CD4-positive, alpha-beta T cell (primary cell): ENCODE measurements at regions of chr10 and their contacts with region 1.

Region 1: GRCh38 chr10:12348870-12349628 is at the start of gene CAMK1D:
- DNase-seq: peak; percentile 84 to 96 (median 90)
- ATAC-seq: peak; percentile 60
- H3K4me3 ChIP-seq: peak within 1 kb of the TSS; percentile 95
- H3K4me3 Mint-ChIP-seq: peak within 1 kb of the TSS; percentile 97
- H3K27ac ChIP-seq: peak within 1 kb of the TSS; percentile 38 to 84
- H3K27ac Mint-ChIP-seq: peak within 1 kb of the TSS; percentile 93
- H3K4me1 ChIP-seq: peaks cover 28% of the 10 kb centered on the region
- H3K4me1 Mint-ChIP-seq: peaks cover 46% of the 10 kb centered on the region
- H3K27me3 ChIP-seq: no peaks in the 10 kb centered on the region
- H3K27me3 Mint-ChIP-seq: no peaks in the 10 kb centered on the region
- CTCF ChIP-seq: peak; percentile 20
- total RNA-seq, gene CAMK1D: 28.8 to 35.3 TPM

Region 2: DNA sequence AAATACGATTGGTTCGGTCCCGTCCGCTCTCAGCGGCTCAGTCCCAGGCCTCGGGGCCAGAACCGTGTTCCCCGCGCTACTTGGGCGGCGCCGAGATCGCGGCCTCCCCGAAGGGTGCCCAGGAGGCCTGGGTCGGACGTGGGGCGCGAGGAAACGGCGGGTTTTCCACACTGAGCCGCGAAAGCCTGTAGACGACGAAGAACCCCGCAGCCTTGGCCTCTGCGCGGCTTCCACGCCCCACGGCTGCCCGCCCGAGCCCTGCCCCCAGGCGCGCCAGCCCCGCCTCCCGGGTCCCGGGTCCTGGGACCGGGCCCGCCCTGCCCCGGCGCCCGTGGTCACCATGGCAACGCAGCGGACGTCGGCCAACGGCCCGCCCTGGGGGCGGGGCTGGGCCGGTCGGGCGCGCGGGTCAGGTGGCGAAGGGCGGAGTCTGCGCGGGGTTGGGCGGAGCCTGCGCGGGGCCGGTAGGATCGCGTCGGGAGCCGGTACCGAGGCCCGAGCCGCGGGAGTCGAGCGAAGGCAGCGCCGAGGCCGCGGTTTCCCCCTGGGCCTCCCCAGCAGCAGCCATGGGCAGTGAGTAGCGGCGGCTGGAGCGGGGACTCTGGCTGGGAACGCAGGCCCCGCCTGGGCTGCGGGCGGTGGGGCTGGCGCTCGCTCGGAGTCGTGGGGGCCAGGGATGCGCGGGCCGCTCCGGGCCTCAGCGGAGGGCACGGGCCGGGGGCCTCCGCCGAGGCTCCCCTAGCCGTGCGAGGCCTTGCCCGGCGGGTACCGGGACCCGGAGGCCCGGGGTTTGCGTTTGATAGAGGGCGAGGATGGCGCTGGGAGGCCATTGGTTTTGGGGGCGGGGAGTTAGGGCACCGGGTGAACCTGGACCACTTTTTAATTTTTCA is 219.6 kb before region 1 on chr10 and contains the start of gene SEC61A2:
- CTCF ChIA-PET with region 1: no interaction called
- POLR2A ChIA-PET with region 1: no interaction called
- intact Hi-C with region 1: loop called in 1 of 2 experiments (anchors 5 kb)
- DNase-seq: peak; percentile 91 to 99 (median 98)
- ATAC-seq: peak; percentile 88
- H3K4me3 ChIP-seq: peak within 1 kb of the TSS; percentile 79
- H3K4me3 Mint-ChIP-seq: peak within 1 kb of the TSS; percentile 96
- H3K27ac ChIP-seq: peak within 1 kb of the TSS; percentile 76 to 79
- H3K27ac Mint-ChIP-seq: peak within 1 kb of the TSS; percentile 83
- H3K4me1 ChIP-seq: peaks cover 21% of the 10 kb centered on the region
- H3K4me1 Mint-ChIP-seq: peaks cover 25% of the 10 kb centered on the region
- H3K27me3 ChIP-seq: no peaks in the 10 kb centered on the region
- H3K27me3 Mint-ChIP-seq: no peaks in the 10 kb centered on the region
- CTCF ChIP-seq: no peak
- total RNA-seq, gene SEC61A2: 9.9 to 10.8 TPM

Region 3: GRCh38 chr10:12264204-12264940 is 84.7 kb before region 1 on chr10:
- CTCF ChIA-PET with region 1: interaction called, 3 read pairs
- POLR2A ChIA-PET with region 1: interaction called, 4 read pairs
- intact Hi-C with region 1: loop called in 1 of 2 experiments (anchors 5 kb)
- DNase-seq: peak; percentile 49 to 85 (median 67)
- ATAC-seq: peak; percentile 82
- H3K4me3 ChIP-seq: peak overlapping the region; percentile 53
- H3K4me3 Mint-ChIP-seq: peak overlapping the region; percentile 71
- H3K27ac ChIP-seq: no peak overlapping the region
- H3K27ac Mint-ChIP-seq: peak overlapping the region; percentile 39
- H3K4me1 ChIP-seq: peaks cover 14% of the 10 kb centered on the region
- H3K4me1 Mint-ChIP-seq: peaks cover 14% of the 10 kb centered on the region
- H3K27me3 ChIP-seq: no peaks in the 10 kb centered on the region
- H3K27me3 Mint-ChIP-seq: no peaks in the 10 kb centered on the region
- CTCF ChIP-seq: peak; percentile 93

Region 4: GRCh38 chr10:12381536-12382156 is 32.6 kb after region 1 on chr10:
- CTCF ChIA-PET with region 1: no interaction called
- POLR2A ChIA-PET with region 1: no interaction called
- intact Hi-C with region 1: no loop called
- DNase-seq: no peak
- ATAC-seq: no peak
- H3K4me3 ChIP-seq: no peak overlapping the region
- H3K4me3 Mint-ChIP-seq: no peak overlapping the region
- H3K27ac ChIP-seq: no peak overlapping the region
- H3K27ac Mint-ChIP-seq: no peak overlapping the region
- H3K4me1 ChIP-seq: no peaks in the 10 kb centered on the region
- H3K4me1 Mint-ChIP-seq: peaks cover 21% of the 10 kb centered on the region
- H3K27me3 ChIP-seq: no peaks in the 10 kb centered on the region
- H3K27me3 Mint-ChIP-seq: no peaks in the 10 kb centered on the region
- CTCF ChIP-seq: no peak

Region 5: DNA sequence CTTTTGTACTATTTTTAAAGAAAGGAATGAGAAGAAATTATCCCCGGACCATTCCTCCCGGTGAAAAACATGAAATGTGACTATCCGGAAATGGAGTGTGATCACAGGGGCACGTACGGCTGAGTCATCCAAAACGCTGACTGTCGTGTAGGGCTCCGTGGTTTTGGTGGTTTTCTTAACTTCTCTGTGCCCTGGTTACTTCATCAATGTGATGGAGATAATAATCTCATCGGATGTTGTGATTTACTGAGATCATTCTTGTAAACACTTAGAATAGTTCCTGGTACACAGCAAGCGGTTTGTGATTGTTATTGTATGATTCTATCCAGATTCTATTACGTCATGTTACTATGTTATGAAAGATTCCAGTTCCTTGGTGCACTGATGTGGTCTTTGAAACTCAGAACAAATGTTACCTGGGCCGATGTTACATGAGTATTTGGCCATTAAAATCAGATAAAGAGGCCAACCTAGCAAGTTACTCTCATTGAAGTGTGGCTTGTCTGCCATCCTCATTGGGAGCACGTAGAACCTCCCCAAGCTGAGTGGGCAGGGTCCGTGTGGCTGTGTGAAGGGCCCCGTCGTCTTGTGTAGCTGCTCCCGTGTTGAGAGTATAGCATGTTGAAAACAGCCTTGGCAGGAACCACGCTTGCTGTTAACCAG is 99.8 kb after region 1 on chr10:
- CTCF ChIA-PET with region 1: interaction called, 4 read pairs
- POLR2A ChIA-PET with region 1: interaction called, 19 read pairs
- intact Hi-C with region 1: loop called (anchors 1 kb)
- DNase-seq: peak; percentile 53 to 96 (median 68)
- ATAC-seq: peak; percentile 87
- H3K4me3 ChIP-seq: peak overlapping the region; percentile 21
- H3K4me3 Mint-ChIP-seq: peak overlapping the region; percentile 72
- H3K27ac ChIP-seq: peak overlapping the region; percentile 58 to 72
- H3K27ac Mint-ChIP-seq: peak overlapping the region; percentile 88
- H3K4me1 ChIP-seq: peaks cover 18% of the 10 kb centered on the region
- H3K4me1 Mint-ChIP-seq: peaks cover 44% of the 10 kb centered on the region
- H3K27me3 ChIP-seq: no peaks in the 10 kb centered on the region
- H3K27me3 Mint-ChIP-seq: no peaks in the 10 kb centered on the region
- CTCF ChIP-seq: no peak

Region 6: DNA sequence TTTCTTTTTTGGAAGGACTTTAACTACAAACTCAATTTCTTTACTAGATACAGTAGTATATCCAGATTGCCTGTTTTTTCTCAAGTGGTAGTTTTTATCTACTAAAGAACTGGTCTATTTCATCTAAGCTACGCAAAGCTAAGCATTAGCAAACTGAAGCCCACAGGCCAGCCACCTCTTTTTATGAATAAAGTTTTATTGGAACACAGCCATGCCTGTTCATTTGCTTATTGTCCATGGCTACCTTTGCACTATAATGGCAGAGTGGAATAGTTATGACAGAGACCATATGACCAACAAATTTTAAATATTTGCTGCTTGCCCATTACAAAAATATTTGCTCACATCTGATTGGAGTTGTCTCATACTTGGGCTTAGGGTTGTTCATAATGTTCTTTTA is 169.0 kb after region 1 on chr10:
- CTCF ChIA-PET with region 1: no interaction called
- POLR2A ChIA-PET with region 1: no interaction called
- intact Hi-C with region 1: no loop called
- DNase-seq: no peak
- ATAC-seq: no peak
- H3K4me3 ChIP-seq: no peak overlapping the region
- H3K4me3 Mint-ChIP-seq: no peak overlapping the region
- H3K27ac ChIP-seq: no peak overlapping the region
- H3K27ac Mint-ChIP-seq: no peak overlapping the region
- H3K4me1 ChIP-seq: peaks cover 2% of the 10 kb centered on the region
- H3K4me1 Mint-ChIP-seq: peaks cover 31% of the 10 kb centered on the region
- H3K27me3 ChIP-seq: no peaks in the 10 kb centered on the region
- H3K27me3 Mint-ChIP-seq: no peaks in the 10 kb centered on the region
- CTCF ChIP-seq: no peak

Region 7: GRCh38 chr10:12605580-12606405 is 256.7 kb after region 1 on chr10:
- CTCF ChIA-PET with region 1: no interaction called
- POLR2A ChIA-PET with region 1: interaction called, 26 read pairs
- intact Hi-C with region 1: loop called in 1 of 2 experiments (anchors 5 kb)
- DNase-seq: peak; percentile 27 to 73 (median 50)
- ATAC-seq: peak; percentile 85
- H3K4me3 ChIP-seq: peak overlapping the region; percentile 56
- H3K4me3 Mint-ChIP-seq: peak overlapping the region; percentile 94
- H3K27ac ChIP-seq: peak overlapping the region; percentile 76 to 77
- H3K27ac Mint-ChIP-seq: peak overlapping the region; percentile 99
- H3K4me1 ChIP-seq: peaks cover 23% of the 10 kb centered on the region
- H3K4me1 Mint-ChIP-seq: peaks cover 55% of the 10 kb centered on the region
- H3K27me3 ChIP-seq: no peaks in the 10 kb centered on the region
- H3K27me3 Mint-ChIP-seq: no peaks in the 10 kb centered on the region
- CTCF ChIP-seq: no peak